ENCODE measurements at regions of chr10 and their contacts with region 1.

Region 1: GRCh38 chr10:98309366-98310355 is 41.7 kb upstream of the LOXL4 start:
- DNase-seq: peak; percentile 47 to 88 (median 76)

Region 2: DNA sequence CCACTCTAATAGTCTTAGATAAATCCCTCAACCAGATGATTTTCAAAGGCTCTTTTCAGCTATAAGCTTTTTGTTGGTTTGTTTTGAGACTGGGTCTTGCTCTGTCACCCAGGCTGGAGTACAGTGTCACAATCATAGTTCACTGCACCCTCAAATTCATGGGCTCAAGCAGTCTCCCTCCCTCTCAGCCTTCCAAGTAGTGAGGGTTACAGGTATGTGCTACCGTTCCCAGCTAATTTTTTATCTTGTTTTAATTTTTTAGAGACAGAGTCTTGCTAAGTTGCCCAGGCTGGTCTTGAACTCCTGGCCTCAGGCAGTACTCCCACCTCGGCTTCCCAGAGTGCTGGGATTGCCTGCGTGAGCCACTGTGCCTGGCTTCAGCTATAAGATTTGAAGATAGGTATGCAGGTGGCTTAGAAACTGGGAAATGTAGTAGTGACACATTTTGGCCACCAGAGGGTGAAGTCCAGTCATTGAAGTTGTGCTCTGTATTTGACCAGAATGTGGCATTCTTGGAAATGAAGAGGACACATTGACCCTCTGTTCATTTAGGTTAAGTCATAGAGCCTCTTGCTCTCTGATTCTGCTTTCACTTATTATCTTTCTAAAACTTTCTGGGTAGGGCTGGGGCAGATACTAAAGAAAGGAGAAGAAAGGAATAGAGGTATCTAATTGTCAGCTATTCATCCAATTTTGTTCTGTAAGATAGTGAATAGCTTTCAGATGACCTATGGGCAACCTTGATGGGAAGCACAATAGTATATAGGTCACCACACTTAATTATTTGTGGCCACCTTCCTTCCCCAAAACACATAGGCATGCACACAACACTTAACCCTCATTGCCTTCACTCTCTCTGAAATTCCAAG is 139.2 kb before region 1 on chr10:
- intact Hi-C with region 1: loop called (anchors 10 kb)
- DNase-seq: peak in 28 of 42 donors; percentile 8 to 72 (median 32)

Region 3: DNA sequence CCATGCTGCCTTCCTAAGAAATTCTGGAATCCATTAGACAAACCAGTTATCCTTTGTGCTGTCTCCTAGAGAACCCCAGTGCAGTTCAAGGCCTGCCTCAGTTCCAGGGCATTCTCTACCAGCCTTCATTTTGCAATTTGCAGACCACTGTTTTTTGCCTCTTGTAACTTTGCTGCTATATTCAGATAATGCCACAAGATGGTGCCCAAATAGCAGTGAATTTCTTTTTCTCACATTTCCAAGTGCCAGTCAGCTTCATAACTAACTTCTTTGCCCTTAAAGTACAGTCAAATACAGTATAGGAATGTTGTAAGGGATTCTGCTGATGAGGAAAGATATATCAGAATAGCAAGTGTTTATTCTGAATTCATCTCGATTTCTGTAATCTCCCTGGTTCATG is 66.8 kb before region 1 on chr10:
- intact Hi-C with region 1: loop called (anchors 5 kb)
- DNase-seq: peak in 1 of 42 donors; percentile 34

Measured in head of caudate nucleus (tissue), 42 donors.